AG04449 (cell line): ENCODE measurements at regions of chr3 and their contacts with region 1.

Region 1: GRCh38 chr3:107235928-107236315 is 141.3 kb upstream of the CCDC54 start:
- DNase-seq: peak; percentile 34
- H3K4me3 ChIP-seq: peak overlapping the region; percentile 49
- CTCF ChIP-seq: peak; percentile 67

Region 2: DNA sequence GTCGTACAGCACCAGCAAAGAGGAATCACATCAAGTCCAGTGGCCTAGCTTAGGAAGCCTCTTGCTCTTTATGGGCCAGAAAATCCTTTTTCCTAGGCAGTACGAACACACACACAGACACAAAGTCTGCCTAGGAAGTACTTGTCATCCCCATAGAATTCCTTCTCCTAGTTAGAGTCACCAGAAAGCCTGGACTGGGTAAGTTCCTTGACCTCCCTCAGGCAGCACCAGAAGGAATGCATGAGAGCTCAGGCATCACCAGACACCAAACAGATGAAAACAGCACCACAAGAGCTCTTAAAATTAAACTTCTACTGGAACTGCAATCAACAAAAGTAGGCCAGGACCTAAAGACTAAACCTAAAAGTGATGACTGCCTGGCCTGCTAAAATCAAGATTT is 51.5 kb before region 1 on chr3:
- CTCF ChIA-PET with region 1: no interaction called
- POLR2A ChIA-PET with region 1: no interaction called
- DNase-seq: peak; percentile 40
- H3K4me3 ChIP-seq: no peak overlapping the region
- CTCF ChIP-seq: no peak

Region 3: DNA sequence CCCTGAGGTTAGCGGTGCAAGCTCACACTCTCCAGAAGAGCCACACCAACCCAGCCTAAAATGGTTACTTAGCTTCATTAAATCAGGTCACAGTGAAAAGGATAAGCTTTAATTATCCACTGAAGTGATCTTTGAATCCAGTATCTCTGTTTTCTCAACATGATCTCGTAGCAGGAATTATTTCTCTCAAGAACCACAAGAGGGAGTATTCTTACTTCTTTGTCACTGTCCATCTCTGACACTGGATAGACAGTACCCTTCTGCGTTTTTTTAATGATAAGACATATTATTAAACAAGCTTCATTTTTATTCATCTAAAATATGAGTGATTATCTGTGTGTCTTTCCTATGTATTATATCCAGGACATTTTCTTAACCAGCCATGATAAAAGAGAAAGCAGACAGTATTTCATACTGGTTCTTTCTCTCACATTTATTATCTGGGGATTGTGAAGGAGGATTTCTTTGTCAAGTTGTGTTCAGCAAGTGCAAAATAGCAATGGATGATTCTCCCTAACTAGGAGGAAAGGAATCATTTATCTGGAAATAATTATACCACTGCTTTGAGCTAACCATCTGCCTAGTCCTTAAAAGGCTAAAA is 36.0 kb after region 1 on chr3:
- CTCF ChIA-PET with region 1: interaction called, 25 read pairs
- POLR2A ChIA-PET with region 1: no interaction called
- DNase-seq: peak; percentile 10
- H3K4me3 ChIP-seq: no peak overlapping the region
- CTCF ChIP-seq: peak; percentile 31

Region 4: DNA sequence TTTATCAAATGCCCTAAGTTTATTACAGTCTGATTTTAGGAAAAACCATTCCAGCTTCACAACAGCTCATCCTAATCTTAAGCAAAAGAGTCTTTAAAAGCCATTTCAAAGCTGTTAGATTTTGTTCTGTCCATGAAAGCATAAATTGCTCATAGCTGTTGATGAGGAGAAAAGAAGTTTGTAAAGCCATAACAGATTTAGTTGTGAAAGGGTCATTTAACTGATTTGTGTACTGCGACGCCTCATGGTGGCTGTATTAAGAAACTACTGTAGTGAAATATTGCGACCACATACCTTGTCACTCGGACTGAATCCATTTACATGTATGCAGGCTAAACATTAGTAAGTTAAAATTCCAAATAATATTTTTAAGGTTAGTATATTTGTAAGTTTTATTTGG is 307.7 kb after region 1 on chr3:
- CTCF ChIA-PET with region 1: interaction called, 11 read pairs
- POLR2A ChIA-PET with region 1: no interaction called
- DNase-seq: no peak
- H3K4me3 ChIP-seq: no peak overlapping the region
- CTCF ChIP-seq: no peak

Region 5: DNA sequence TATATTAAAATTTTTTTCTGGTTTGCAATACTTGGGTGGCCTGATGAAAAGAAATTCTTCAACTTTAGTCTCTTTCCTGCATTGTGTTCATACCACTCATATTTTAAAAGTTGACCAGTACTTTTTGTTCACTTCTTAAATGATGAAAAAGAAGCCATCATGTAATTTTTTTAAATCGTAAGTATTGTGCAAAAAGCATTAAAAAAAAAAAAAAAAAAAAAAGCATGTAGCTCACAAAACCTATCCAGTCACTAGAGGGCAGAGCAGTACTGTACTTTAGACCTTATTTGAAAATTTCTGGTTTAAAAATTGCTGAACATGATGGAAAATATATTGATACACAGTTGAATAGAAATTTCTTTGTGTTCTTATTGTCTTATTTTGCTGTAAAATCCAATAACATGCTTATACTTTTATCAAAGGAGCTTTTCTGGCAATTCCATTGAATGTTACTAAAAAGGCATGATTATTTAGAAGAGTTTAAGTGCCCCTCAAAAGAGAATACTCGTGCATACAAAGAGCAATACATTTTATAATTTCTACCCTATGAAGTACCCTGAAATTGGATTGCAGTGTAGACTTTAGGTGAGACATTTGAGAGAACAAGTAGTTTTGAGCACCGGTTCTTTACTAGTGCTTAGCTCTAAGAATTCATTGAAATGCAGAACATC is 424.5 kb after region 1 on chr3:
- CTCF ChIA-PET with region 1: interaction called, 16 read pairs
- POLR2A ChIA-PET with region 1: interaction called, 6 read pairs
- DNase-seq: peak; percentile 53
- H3K4me3 ChIP-seq: no peak overlapping the region
- CTCF ChIP-seq: peak; percentile 37

Region 6: GRCh38 chr3:107846279-107846852 is 610.4 kb after region 1 on chr3:
- CTCF ChIA-PET with region 1: interaction called, 18 read pairs
- POLR2A ChIA-PET with region 1: interaction called, 3 read pairs
- DNase-seq: no peak
- H3K4me3 ChIP-seq: no peak overlapping the region
- CTCF ChIP-seq: peak; percentile 82